ENCODE measurements at regions of chr4 and their contacts with region 1.

Region 1: GRCh38 chr4:76430519-76431388 is 4.3 kb upstream of the SHROOM3 start:
- DNase-seq: no peak

Region 2: GRCh38 chr4:75030733-75031132 is 1400.0 kb before region 1 on chr4:
- intact Hi-C with region 1: loop called in 1 of 2 experiments (anchors 5 kb)
- DNase-seq: no peak

Region 3: DNA sequence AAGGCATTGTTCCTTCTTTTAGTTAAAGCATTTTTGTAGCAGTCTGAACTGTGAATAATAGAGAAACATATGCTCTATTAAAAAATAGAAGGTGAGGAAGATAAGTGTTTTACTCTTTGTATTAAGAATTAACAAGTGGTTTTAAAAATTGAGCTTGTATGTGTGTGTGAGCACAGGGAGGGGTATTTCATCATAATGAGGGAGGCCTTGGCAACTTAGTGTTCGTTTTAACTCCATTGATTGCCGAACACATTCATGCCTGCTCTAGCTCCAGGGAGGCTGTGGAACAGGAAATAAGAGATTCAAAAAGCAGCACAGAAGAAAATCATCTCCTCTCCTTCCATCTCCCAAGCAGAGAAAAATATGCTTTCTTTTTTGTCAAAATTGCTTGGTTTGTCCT is 19.1 kb after region 1 on chr4:
- intact Hi-C with region 1: no loop called
- DNase-seq: no peak

Region 4: DNA sequence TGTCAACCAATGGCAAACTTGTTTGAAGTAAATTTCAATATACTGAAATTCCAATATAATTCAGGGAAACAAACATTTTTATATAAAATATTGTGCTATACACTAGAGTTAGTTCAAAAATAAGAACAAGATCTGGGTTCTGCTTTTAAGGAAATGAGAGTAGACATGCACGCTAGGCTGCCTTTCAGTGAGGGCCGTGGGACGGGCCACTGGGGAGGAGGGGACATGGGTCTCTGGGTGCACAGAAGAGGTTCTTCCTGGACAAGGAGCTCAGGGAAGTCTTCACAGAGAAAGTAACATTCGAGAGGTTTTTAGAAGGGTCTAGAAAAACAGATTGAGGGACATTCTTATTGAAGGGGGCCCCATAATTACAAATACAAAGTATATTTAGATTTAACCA is 68.7 kb after region 1 on chr4:
- intact Hi-C with region 1: loop called (anchors 5 kb)
- DNase-seq: no peak

Region 5: DNA sequence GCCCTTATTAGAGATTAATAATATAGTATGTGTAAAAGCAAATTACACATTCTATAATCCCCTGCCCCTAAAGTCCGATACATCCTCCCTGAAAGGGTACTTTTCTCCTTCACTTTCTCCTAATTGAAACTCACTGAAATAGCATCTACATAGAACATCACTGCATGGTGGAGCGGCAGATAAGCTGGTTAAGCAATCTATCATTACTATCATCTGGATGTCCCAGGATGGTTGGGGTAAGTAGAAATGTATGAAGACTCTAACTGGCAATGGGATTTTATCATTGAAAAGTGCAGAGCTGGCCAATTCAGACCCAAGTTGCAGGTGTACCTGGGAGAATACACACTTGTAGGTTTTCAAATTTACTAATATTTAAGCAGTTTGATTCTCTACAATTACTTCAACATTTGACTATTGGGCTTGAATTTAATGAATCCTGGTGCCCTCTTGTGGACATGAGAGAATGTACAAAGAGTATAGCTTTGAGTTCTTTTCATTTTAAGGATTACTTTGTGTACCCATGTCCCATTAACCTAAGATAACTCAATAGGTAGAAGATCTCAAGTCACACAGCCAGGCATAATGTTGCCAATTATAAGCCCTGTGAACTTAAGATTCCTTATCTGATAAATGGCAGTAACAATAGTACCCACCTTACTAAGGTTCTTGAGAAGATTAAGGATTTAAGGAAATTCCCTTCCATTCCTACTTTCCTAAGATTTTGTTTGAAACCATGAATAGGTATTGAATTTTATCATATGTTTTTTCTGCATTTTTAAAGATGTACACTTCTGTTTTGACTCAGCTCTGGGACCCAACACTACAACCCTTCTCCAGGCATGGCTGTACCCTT is 74.1 kb after region 1 on chr4:
- intact Hi-C with region 1: loop called in 1 of 2 experiments (anchors 5 kb)
- DNase-seq: no peak

Region 6: DNA sequence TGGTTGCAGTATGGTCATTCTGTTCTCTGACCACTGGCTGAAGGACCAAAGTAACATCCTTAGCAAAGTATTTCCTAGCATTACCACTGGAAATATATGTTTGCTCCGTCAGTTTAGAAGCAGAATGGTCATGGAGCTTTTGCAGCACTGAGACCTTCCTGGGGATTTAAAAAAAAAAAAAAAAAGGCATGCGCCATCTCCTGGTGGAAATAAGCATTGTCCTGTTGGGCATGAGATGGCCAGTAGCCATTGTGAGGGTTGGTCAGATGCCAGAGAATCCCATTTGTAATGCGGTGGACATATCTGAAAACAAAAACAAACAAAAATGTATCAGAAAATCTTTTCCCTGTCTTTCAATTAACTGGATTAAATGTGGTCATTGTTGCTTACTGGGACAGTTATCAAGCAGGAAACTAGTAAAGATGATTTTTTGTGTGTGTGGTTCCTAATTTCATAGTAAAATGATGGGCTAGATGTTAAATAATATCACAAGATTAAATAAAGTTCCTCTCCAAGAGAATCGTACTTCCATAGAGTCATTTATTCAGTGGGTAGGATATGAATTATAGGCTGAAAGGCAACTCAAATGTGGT is 327.6 kb after region 1 on chr4:
- intact Hi-C with region 1: loop called in 1 of 2 experiments (anchors 10 kb)
- DNase-seq: no peak

Measured in posterior vena cava (tissue), 2 donors.